CD14-positive monocyte (primary cell): ENCODE measurements at regions of chr1 and their contacts with region 1.

Region 1: GRCh38 chr1:89757532-89757931 is 63.3 kb upstream of the LRRC8D start:
- DNase-seq: peak; percentile 71 to 94 (median 85)
- H3K4me3 ChIP-seq: peak overlapping the region; percentile 5 to 61 (median 42)
- H3K4me3 Mint-ChIP-seq: peak overlapping the region; percentile 65 to 81
- H3K27ac ChIP-seq: peak overlapping the region; percentile 63 to 85
- H3K27ac Mint-ChIP-seq: peak overlapping the region; percentile 87 to 98 (median 93)
- H3K4me1 ChIP-seq: peaks cover 96 to 99% of the 10 kb centered on the region in 2 donors
- H3K4me1 Mint-ChIP-seq: peaks cover 94% of the 10 kb centered on the region
- H3K27me3 ChIP-seq: no peaks in the 10 kb centered on the region
- H3K27me3 Mint-ChIP-seq: peaks cover 0 to 1% (median 0%) of the 10 kb centered on the region in 3 donors
- CTCF ChIP-seq: no peak

Region 2: GRCh38 chr1:89524369-89525168 is 233.0 kb before region 1 on chr1 and contains the start of gene LRRC8B:
- intact Hi-C with region 1: loop called in 1 of 2 experiments (anchors 5 kb)
- DNase-seq: peak; percentile 89 to 90 (median 90)
- H3K4me3 ChIP-seq: peak within 1 kb of the TSS; percentile 88 to 98 (median 92)
- H3K4me3 Mint-ChIP-seq: peak within 1 kb of the TSS; percentile 97 to 99
- H3K27ac ChIP-seq: peak within 1 kb of the TSS; percentile 81 to 98
- H3K27ac Mint-ChIP-seq: peak within 1 kb of the TSS; percentile 91 to 96 (median 92)
- H3K4me1 ChIP-seq: peaks cover 15 to 47% of the 10 kb centered on the region in 2 donors
- H3K4me1 Mint-ChIP-seq: peaks cover 28% of the 10 kb centered on the region
- H3K27me3 ChIP-seq: no peaks in the 10 kb centered on the region
- H3K27me3 Mint-ChIP-seq: peaks cover 0 to 1% (median 0%) of the 10 kb centered on the region in 3 donors
- CTCF ChIP-seq: no peak
- polyA plus RNA-seq, gene LRRC8B: 4.5 to 9.1 (median 7.9) TPM

Region 3: DNA sequence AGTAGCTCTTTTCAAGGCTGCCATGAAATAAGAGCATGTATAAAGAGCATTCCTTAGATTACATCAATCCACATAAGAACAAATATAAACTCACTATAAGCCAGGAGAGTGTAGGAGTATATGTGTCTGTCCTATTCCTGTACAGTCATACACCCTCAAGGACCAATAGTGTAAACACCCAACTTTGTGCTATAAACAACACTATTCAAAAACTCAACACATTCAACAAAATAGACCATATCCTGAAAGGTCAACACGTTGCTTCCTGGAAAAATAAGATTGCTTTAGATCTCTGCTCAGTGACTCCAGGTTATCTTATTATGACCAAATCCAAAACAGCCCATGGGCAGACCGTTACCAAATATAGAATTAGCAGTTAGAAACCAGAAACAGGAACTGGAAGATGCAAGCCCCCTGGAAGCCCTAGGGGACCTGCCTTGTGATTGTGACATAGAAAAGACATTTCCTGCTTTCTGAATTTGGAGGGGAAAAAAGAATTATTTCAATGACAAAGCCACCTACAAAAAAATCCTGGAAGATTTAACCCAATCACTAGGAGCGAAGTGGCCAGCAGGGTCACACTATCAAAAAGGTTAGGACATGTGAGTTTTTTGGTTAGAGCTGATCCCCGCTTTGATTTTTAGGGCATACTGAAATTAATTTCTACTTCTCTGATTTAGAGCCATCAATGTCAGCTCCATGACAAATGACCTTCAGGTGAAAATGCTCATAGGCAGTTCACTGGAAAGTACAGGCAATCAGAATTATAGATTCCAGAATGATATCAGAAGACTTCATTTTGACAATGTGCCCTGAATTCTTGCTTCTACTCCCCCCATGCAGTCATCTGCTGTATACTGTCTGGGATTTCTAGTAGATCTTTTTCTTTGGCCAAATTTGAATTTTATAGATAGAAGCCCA is 64.7 kb before region 1 on chr1:
- intact Hi-C with region 1: loop called in 1 of 2 experiments (anchors 10 kb)
- DNase-seq: peak in 2 of 3 donors; percentile 71 to 83
- H3K4me3 ChIP-seq: peak overlapping the region in 1 of 3 experiments; percentile 5
- H3K4me3 Mint-ChIP-seq: peak overlapping the region; percentile 1 to 60
- H3K27ac ChIP-seq: peak overlapping the region; percentile 8 to 79
- H3K27ac Mint-ChIP-seq: peak overlapping the region; percentile 85 to 95 (median 90)
- H3K4me1 ChIP-seq: peaks cover 33 to 47% of the 10 kb centered on the region in 2 donors
- H3K4me1 Mint-ChIP-seq: peaks cover 71% of the 10 kb centered on the region
- H3K27me3 ChIP-seq: no peaks in the 10 kb centered on the region
- H3K27me3 Mint-ChIP-seq: peaks cover 0 to 5% (median 0%) of the 10 kb centered on the region in 3 donors
- CTCF ChIP-seq: no peak

Region 4: DNA sequence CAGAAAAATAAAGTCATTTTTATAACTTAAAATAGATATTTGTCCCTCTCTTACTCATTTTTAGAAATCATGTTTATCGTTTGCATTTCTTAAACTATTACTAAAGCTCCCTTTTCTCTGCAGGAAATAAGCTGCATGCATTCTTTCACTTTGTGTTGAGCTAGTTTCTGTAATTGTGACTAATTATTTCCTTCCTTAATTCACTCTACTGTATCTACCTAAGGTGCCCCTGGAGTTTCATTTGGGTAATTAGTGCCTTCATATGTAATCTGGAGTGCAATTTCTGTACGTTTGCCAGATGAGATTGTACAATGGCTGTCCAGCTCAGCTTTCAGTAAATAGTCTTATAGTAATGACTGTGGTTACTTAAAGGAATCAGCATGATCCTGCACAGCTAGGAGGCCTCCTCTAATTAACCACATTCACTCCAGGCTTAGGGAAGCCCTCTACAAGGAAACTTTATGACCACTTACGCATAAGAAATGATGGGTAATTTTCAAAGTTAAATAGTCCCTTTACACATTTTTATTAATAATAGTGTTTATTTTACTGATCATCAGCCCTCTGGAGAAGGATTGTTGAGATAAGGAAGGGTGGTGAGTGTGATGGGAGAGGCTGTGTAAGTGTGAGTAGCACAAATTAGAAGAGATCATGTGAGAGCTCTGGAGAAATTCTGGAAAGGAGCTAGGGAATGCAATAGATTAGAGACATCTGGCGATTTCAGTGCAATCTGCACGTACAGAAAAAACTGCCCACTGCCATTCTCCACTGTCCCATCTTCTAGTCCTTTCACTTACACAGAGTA is 37.8 kb before region 1 on chr1:
- intact Hi-C with region 1: loop called (anchors 2 to 5 kb)
- DNase-seq: peak; percentile 56 to 91 (median 85)
- H3K4me3 ChIP-seq: peak overlapping the region in 2 of 3 experiments; percentile 25 to 58
- H3K4me3 Mint-ChIP-seq: peak overlapping the region; percentile 27 to 84
- H3K27ac ChIP-seq: peak overlapping the region; percentile 13 to 83
- H3K27ac Mint-ChIP-seq: peak overlapping the region; percentile 85 to 98 (median 96)
- H3K4me1 ChIP-seq: peaks cover 58 to 68% of the 10 kb centered on the region in 2 donors
- H3K4me1 Mint-ChIP-seq: peaks cover 67% of the 10 kb centered on the region
- H3K27me3 ChIP-seq: no peaks in the 10 kb centered on the region
- H3K27me3 Mint-ChIP-seq: peaks cover 0 to 2% (median 0%) of the 10 kb centered on the region in 3 donors
- CTCF ChIP-seq: peak; percentile 17

Region 5: DNA sequence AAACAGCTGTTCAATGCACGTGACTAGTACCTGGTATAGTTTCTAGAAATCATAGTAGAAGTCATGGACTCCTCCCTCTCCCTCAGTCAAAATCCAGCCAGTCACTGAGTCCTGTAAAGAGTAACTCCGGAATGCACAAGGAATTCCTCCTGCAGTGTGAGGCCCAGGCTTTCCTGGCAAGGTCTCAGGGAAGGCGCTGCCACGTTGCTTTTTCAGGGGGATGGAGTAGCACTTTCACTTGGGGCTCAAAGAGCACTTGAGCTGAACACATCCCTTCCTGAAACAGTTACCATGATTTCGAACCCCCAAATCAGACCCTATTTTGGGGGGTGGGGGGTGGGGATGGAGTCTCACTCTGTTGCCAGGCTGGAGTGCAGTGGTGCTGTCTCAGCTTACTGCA is 36.9 kb after region 1 on chr1:
- intact Hi-C with region 1: no loop called
- DNase-seq: no peak
- H3K4me3 ChIP-seq: no peak overlapping the region
- H3K4me3 Mint-ChIP-seq: no peak overlapping the region
- H3K27ac ChIP-seq: no peak overlapping the region
- H3K27ac Mint-ChIP-seq: no peak overlapping the region
- H3K4me1 ChIP-seq: peaks cover 7 to 9% of the 10 kb centered on the region in 2 donors
- H3K4me1 Mint-ChIP-seq: peaks cover 9% of the 10 kb centered on the region
- H3K27me3 ChIP-seq: no peaks in the 10 kb centered on the region
- H3K27me3 Mint-ChIP-seq: peaks cover 0 to 4% (median 3%) of the 10 kb centered on the region in 3 donors
- CTCF ChIP-seq: no peak